ENCODE measurements at regions of chr2 and their contacts with region 1.

Region 1: DNA sequence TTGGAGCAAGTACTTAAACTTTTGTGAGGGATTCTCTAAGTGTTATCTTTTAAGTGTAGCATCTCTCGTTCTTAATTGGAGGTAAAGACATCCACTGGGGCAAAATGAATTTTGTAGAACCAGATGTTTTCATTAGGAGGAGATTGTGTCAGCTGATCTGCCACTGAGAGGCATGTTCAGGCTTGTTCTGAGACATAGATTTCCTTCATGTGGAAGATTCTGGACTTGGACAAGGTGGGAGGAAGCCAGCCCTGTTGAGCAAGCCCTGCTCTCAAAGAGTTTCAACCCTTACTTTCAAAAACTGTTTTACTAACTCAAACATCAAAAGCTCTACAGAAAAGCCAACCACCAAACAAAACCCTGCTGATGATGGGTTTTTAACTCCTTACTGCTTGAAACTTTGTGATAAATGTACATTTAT is 6.5 kb downstream of the MAP4K4 start:
- DNase-seq: peak; percentile 80
- H3K4me3 Mint-ChIP-seq: peak overlapping the region; percentile 59
- H3K27ac Mint-ChIP-seq: peak overlapping the region; percentile 90
- H3K4me1 Mint-ChIP-seq: peaks cover 59% of the 10 kb centered on the region
- H3K27me3 Mint-ChIP-seq: no peaks in the 10 kb centered on the region

Region 2: GRCh38 chr2:101089419-101089818 is 614.6 kb before region 1 on chr2:
- intact Hi-C with region 1: no loop called
- DNase-seq: no peak
- H3K4me3 Mint-ChIP-seq: no peak overlapping the region
- H3K27ac Mint-ChIP-seq: no peak overlapping the region
- H3K4me1 Mint-ChIP-seq: peaks cover 3% of the 10 kb centered on the region
- H3K27me3 Mint-ChIP-seq: no peaks in the 10 kb centered on the region

Region 3: DNA sequence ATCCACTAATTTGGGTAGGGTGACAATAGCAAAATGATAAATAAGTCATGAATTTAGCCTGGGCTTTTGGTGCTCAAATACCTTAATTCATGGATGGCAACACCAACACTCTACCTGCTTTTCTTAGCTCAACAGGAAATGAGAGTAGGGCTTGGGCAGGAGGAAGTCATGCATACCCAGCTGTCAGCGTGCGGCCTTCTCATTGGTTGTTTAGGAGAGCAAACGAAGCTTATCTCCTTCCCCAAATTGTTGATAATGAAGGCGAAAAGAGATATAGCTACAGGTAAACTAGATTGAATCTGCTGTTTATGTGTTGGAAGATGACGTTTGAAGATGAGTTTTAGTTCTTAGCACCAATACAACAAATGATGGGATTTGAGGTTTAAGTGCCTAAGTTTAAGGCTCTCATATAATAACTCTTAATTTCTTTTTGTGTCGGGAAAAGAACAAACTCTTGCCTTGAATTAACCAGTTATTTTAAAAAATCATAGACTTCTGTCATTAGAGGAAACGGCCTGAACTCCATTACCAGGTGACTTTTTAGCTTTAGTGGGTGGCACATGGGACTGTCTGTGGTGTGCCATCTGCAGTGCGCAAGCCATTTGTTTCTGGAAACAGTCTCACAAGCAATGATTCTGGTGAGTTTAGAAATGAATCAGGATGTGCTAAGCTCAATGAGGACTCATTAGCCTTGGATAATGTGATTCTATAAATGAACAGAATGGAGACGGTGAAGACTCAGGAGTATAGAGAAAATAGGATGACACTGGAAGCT is 13.2 kb after region 1 on chr2:
- intact Hi-C with region 1: loop called (anchors 1 kb)
- DNase-seq: peak; percentile 81
- H3K4me3 Mint-ChIP-seq: peak overlapping the region; percentile 31
- H3K27ac Mint-ChIP-seq: peak overlapping the region; percentile 90
- H3K4me1 Mint-ChIP-seq: peaks cover 58% of the 10 kb centered on the region
- H3K27me3 Mint-ChIP-seq: no peaks in the 10 kb centered on the region

Region 4: GRCh38 chr2:101758001-101758400 is 53.9 kb after region 1 on chr2:
- intact Hi-C with region 1: loop called (anchors 1 kb)
- DNase-seq: no peak
- H3K4me3 Mint-ChIP-seq: peak overlapping the region; percentile 32
- H3K27ac Mint-ChIP-seq: peak overlapping the region; percentile 10
- H3K4me1 Mint-ChIP-seq: peaks cover 38% of the 10 kb centered on the region
- H3K27me3 Mint-ChIP-seq: no peaks in the 10 kb centered on the region

Region 5: DNA sequence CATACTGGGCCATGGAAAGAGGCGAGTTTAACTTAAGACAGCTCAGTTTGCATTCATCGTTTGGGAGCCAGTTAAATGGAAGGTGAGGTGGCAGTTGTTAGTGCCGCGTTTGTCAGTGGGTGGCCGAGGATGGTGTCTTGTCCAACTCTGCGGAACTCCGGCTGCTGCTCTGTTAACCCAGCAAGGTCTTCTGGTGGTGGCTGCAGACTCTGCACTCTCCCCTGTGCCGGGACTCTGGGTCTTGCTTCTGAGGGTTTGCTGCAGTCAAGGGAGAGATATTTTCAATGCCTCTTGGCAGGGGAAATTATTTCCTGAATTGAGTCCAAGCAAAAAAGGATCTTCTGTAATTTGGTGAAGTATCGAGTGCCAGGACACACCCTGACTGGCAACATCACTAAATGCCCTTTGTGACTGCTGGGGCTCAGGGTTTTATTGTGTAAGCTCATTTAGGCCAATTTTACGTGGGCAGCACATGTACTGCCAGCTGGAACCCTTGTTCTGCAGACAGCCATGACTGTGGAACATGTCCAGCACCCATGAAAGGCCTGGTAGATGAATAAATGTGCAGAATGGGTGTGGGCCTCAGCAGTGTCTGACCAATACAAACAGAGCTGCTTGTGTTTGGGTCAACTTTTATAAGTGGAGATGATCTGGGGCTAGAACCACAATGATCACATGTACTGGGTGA is 345.8 kb after region 1 on chr2:
- intact Hi-C with region 1: no loop called
- DNase-seq: no peak
- H3K4me3 Mint-ChIP-seq: no peak overlapping the region
- H3K27ac Mint-ChIP-seq: peak overlapping the region; percentile 29
- H3K4me1 Mint-ChIP-seq: peaks cover 2% of the 10 kb centered on the region
- H3K27me3 Mint-ChIP-seq: peaks cover 25% of the 10 kb centered on the region

Region 6: DNA sequence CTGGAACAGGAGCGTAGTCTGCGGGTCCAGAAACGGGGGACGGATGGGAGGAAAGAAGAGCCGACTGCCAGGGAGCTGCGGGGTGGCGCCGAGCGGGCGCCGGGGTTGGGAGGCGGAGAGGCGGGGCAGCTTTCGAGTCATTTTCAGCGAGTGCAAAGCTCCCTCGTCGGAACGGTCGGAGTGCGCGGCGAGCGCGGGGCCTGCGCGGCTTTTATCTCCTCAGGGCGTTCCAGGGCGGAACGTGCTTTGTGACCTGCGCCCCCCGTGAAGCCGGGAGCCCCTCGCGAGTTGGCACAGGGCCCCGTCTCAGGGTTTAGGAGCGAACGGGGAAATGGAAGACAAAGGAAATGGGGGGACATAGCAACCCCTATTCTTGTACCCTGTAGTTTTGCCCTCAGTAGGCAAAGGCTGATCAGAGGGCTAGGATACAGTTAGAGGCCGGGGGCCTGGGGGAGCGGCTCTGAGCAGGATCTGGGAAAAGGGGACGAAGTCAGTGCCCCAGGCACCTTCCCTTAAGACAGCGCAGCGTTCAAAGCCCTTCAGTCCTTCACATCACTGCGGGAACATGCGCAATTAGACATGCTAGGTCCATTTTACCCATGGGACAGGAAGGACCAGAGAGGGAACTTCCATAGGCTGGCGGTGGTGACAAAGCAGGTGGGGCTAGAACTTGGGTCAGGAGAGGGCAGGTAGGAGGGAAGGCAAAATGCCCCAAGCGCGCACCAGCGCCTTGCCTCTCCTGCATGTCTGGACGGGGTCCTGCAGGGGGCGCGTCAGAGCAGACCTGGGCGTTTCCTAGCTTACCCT is 547.2 kb after region 1 on chr2:
- intact Hi-C with region 1: loop called (anchors 10 kb)
- DNase-seq: peak; percentile 87
- H3K4me3 Mint-ChIP-seq: peak overlapping the region; percentile 84
- H3K27ac Mint-ChIP-seq: peak overlapping the region; percentile 87
- H3K4me1 Mint-ChIP-seq: peaks cover 33% of the 10 kb centered on the region
- H3K27me3 Mint-ChIP-seq: peaks cover 2% of the 10 kb centered on the region

Region 7: GRCh38 chr2:102436323-102436722 is 732.3 kb after region 1 on chr2:
- intact Hi-C with region 1: loop called (anchors 10 kb)
- DNase-seq: no peak
- H3K4me3 Mint-ChIP-seq: peak overlapping the region; percentile 43
- H3K27ac Mint-ChIP-seq: peak overlapping the region; percentile 87
- H3K4me1 Mint-ChIP-seq: peaks cover 33% of the 10 kb centered on the region
- H3K27me3 Mint-ChIP-seq: no peaks in the 10 kb centered on the region

Measured in activated CD4-positive, alpha-beta T cell treated with anti-CD3 and anti-CD28 coated beads, Interleukin-2, amount 10 ng/mL, durations not matched to agents 24 days and 14 days (primary cell).